ENCODE measurements at regions of chr2 and their contacts with region 1.

Region 1: GRCh38 chr2:68766376-68766845 is 31.8 kb downstream of the ARHGAP25 start:
- DNase-seq: peak; percentile 37 to 91 (median 75)
- ATAC-seq: peak; percentile 62
- H3K4me3 ChIP-seq: peak overlapping the region; percentile 25 to 34
- H3K4me3 Mint-ChIP-seq: peak overlapping the region; percentile 81
- H3K27ac ChIP-seq: peak overlapping the region; percentile 73 to 88
- H3K27ac Mint-ChIP-seq: peak overlapping the region; percentile 100
- H3K4me1 ChIP-seq: peaks cover 98% of the 10 kb centered on the region
- H3K4me1 Mint-ChIP-seq: peaks cover 95% of the 10 kb centered on the region
- H3K27me3 ChIP-seq: no peaks in the 10 kb centered on the region
- H3K27me3 Mint-ChIP-seq: no peaks in the 10 kb centered on the region
- CTCF ChIP-seq: no peak

Region 2: DNA sequence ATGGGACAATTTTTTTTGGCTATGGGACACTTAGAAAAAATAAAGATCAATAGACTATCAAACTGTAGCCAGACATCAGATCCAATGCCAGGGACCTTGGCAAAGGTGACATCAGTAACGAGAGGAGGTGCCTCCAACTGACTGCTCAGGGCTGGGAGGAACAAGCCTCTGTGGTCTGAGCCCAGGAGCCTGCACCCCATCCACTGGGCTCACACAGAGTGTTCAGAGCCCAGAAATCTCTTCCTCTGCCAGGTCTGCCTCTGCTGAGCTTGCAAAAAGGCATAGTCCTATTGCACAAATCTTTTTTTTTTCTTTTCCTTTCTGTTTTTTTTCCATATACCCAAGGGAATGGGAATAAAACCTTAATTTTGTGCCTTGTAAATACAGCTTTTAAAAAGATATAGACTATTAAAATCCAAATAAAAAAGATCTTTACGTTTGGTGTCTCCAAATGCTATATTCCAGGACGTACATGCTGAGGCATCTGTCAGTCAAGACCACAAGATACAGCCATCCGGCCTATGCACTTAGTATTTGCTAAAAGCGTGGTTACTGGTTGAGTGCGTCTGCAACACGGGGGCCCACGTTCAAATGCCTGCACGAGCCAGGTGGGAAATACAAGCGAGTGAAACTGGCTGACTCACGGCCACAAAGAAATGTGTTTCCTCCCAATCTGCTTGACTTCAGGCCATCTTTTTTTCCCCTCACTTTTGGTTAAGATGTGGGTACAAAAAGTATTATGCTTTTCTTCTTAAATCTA is 39.6 kb before region 1 on chr2:
- CTCF ChIA-PET with region 1: interaction called, 4 read pairs
- POLR2A ChIA-PET with region 1: interaction called, 6 read pairs
- intact Hi-C with region 1: loop called in 1 of 2 experiments (anchors 5 kb)
- DNase-seq: peak; percentile 48 to 92 (median 81)
- ATAC-seq: peak; percentile 98
- H3K4me3 ChIP-seq: no peak overlapping the region
- H3K4me3 Mint-ChIP-seq: peak overlapping the region; percentile 22
- H3K27ac ChIP-seq: peak overlapping the region in 1 of 2 experiments; percentile 60
- H3K27ac Mint-ChIP-seq: peak overlapping the region; percentile 82
- H3K4me1 ChIP-seq: peaks cover 37% of the 10 kb centered on the region
- H3K4me1 Mint-ChIP-seq: peaks cover 54% of the 10 kb centered on the region
- H3K27me3 ChIP-seq: no peaks in the 10 kb centered on the region
- H3K27me3 Mint-ChIP-seq: no peaks in the 10 kb centered on the region
- CTCF ChIP-seq: no peak

Region 3: GRCh38 chr2:68784188-68784587 is 17.8 kb after region 1 on chr2:
- CTCF ChIA-PET with region 1: interaction called, 12 read pairs
- POLR2A ChIA-PET with region 1: interaction called, 6 read pairs
- intact Hi-C with region 1: no loop called
- DNase-seq: no peak
- ATAC-seq: no peak
- H3K4me3 ChIP-seq: no peak overlapping the region
- H3K4me3 Mint-ChIP-seq: peak overlapping the region; percentile 3
- H3K27ac ChIP-seq: peak overlapping the region in 1 of 2 experiments; percentile 61
- H3K27ac Mint-ChIP-seq: peak overlapping the region; percentile 56
- H3K4me1 ChIP-seq: peaks cover 60% of the 10 kb centered on the region
- H3K4me1 Mint-ChIP-seq: peaks cover 34% of the 10 kb centered on the region
- H3K27me3 ChIP-seq: no peaks in the 10 kb centered on the region
- H3K27me3 Mint-ChIP-seq: no peaks in the 10 kb centered on the region
- CTCF ChIP-seq: no peak

Region 4: DNA sequence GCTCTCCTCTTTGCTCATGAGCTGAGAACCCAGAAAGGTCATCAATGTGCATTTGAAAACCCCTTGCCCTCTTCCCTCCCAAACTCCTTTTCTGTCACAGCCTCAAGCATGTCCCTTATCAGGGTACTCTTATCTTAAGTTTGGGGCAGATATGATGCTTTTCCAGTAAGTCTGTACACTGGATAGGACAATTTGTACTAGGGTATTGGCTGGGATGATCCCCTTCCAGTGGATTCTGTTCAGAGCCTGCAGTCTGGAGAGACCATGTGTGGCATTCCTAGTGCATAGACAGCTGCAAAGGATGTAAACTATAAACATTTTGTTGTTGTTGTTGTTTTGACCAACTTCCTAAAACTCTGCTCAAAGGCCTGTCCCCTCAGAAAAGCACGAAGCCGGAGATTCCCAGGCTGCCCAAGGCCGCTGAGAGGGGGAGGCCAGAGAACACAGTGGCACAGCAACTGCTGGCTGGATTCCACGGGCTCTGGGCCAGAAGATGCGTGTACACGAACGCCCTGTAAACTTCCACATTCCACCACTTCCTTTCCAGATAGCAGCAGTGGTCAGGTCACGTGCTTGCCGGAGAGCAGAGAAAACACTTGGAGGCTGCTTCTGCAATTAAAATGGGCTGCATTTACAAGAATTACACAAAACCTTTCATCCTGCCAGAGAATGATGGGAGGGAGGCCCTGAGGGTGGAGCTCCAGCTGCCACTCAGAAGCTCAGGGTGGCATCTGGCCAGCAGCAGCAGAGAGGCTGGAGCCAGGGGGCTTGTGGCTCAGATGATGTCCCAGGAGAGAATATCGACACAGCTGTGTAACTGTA is 62.7 kb after region 1 on chr2:
- CTCF ChIA-PET with region 1: no interaction called
- POLR2A ChIA-PET with region 1: interaction called, 20 read pairs
- intact Hi-C with region 1: no loop called
- DNase-seq: peak; percentile 17 to 87 (median 73)
- ATAC-seq: peak; percentile 61
- H3K4me3 ChIP-seq: no peak overlapping the region
- H3K4me3 Mint-ChIP-seq: peak overlapping the region; percentile 53
- H3K27ac ChIP-seq: peak overlapping the region; percentile 26 to 70
- H3K27ac Mint-ChIP-seq: peak overlapping the region; percentile 92
- H3K4me1 ChIP-seq: peaks cover 51% of the 10 kb centered on the region
- H3K4me1 Mint-ChIP-seq: peaks cover 67% of the 10 kb centered on the region
- H3K27me3 ChIP-seq: no peaks in the 10 kb centered on the region
- H3K27me3 Mint-ChIP-seq: no peaks in the 10 kb centered on the region
- CTCF ChIP-seq: no peak